IMR-90 (cell line): ENCODE measurements at regions of chr5 and their contacts with region 1.

Region 1: GRCh38 chr5:65481635-65482295 is at the start of gene ADAMTS6:
- DNase-seq: peak; percentile 99
- ATAC-seq: peak; percentile 85
- H3K4me3 ChIP-seq: peak within 1 kb of the TSS; percentile 88
- H3K27ac ChIP-seq: peak within 1 kb of the TSS; percentile 96
- H3K4me1 ChIP-seq: peaks cover 2% of the 10 kb centered on the region; the same call in 1 of the 2 replicates
- H3K27me3 ChIP-seq: no peaks in the 10 kb centered on the region
- CTCF ChIP-seq: no peak
- POLR2A ChIP-seq: peak; percentile 76; the same call in 1 of the 2 replicates
- RAD21 ChIP-seq: no peak
- total RNA-seq, gene ADAMTS6: 160 and 173 TPM in 2 replicates

Region 2: DNA sequence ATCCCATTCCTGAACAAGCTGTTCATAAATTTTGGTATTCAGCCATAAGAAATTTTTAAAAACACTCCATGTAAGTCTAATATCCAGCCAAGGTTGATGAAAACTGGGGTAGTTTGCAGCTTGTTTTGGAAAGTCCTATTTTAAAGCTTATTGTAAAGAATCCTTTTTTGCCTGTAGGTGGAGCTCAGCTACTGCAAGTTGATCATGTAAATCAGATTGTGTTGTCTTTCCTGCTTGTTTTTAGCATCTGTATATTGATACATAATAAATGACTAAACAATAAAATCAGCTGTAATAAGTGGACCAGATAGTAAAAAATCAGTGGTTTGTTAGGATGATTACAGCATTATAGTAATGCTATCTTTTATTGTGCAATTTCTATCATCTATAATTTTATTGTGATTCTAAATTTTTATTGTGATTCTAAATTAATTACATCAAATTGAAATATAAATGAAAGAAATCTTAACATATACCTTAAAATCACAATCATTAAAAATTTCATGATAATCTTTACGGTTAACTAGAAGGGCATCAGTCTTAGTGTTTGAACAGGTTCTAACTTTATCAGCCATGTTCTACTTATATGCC is 670.6 kb before region 1 on chr5:
- CTCF ChIA-PET with region 1: interaction called, 9 read pairs
- POLR2A ChIA-PET with region 1: interaction called, 3 read pairs
- dilution Hi-C with region 1: no loop called
- in situ Hi-C with region 1: loop called (anchors 5 kb)
- intact Hi-C with region 1: loop called (anchors 1 kb)
- DNase-seq: peak; percentile 81
- ATAC-seq: peak; percentile 77
- H3K4me3 ChIP-seq: no peak overlapping the region
- H3K27ac ChIP-seq: no peak overlapping the region
- H3K4me1 ChIP-seq: no peaks in the 10 kb centered on the region
- H3K27me3 ChIP-seq: no peaks in the 10 kb centered on the region
- CTCF ChIP-seq: peak; percentile 81
- POLR2A ChIP-seq: 0 out of 2 replicates have a peak, but pooled peaks have one; percentile 30
- RAD21 ChIP-seq: peak; percentile 89

Region 3: DNA sequence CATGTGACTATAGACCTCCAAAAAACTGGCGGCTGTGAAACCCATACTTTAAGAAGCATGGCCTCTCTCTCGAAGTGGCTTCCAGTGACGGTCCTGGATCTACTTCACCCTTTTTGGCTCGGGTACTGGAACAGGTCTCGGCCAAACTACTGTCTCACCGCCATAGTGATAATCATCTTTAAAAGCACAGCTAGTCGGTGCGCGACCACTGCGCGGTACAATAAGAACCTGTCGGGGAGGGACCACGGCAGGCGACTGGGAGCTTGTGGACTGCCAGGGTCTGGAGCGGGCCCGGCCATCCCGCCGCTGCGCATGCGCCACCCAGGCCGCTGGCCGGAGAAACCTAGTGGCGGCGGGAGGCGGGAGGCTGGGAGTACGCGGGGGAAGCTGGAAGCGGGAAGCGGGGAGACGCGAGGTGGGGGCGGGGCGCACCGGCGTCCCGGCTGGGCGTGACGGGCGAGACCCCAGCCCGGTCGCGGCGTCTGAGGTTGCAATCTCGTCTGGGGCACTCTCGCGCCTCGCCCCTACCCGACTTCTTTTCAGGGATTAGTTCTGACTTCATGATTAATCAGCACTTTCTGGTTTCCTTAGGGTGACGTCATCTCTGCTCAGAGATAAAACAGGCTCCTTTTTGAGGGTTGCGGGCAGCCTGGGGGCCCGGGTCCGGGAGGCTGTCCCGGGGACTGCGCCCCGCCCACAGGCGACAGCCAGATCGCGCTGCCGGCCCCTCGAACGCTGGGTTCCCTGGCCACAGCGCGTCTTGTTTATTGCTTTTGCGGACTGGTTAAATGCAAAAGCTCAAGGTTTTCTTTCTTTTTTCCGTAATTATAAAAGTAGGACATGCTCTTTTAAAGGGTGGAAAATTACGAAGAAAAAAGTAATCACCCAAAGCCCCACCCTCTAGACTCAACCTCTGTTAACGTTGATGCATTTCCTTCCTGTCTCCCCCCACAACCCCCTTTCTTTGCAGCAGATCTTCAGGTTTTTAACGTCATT is 446.3 kb before region 1 on chr5:
- CTCF ChIA-PET with region 1: no interaction called
- POLR2A ChIA-PET with region 1: no interaction called
- dilution Hi-C with region 1: no loop called
- in situ Hi-C with region 1: no loop called
- intact Hi-C with region 1: loop called (anchors 1 kb)
- DNase-seq: peak; percentile 97
- ATAC-seq: peak; percentile 91
- H3K4me3 ChIP-seq: peak overlapping the region; percentile 64
- H3K27ac ChIP-seq: peak overlapping the region; percentile 96
- H3K4me1 ChIP-seq: peaks cover 8% of the 10 kb centered on the region
- H3K27me3 ChIP-seq: no peaks in the 10 kb centered on the region
- CTCF ChIP-seq: no peak
- POLR2A ChIP-seq: peak; percentile 88
- RAD21 ChIP-seq: no peak; the same call in 1 of the 2 replicates

Region 4: GRCh38 chr5:65125591-65126541 is 355.9 kb before region 1 on chr5:
- CTCF ChIA-PET with region 1: interaction called, 5 read pairs
- POLR2A ChIA-PET with region 1: interaction called, 11 read pairs
- dilution Hi-C with region 1: no loop called
- in situ Hi-C with region 1: no loop called
- intact Hi-C with region 1: loop called (anchors 1 kb)
- DNase-seq: peak; percentile 82
- ATAC-seq: peak; percentile 45
- H3K4me3 ChIP-seq: no peak overlapping the region
- H3K27ac ChIP-seq: peak overlapping the region; percentile 90
- H3K4me1 ChIP-seq: peaks cover 19% of the 10 kb centered on the region
- H3K27me3 ChIP-seq: no peaks in the 10 kb centered on the region
- CTCF ChIP-seq: no peak
- POLR2A ChIP-seq: no peak; the same call in 1 of the 2 replicates
- RAD21 ChIP-seq: no peak

Region 5: DNA sequence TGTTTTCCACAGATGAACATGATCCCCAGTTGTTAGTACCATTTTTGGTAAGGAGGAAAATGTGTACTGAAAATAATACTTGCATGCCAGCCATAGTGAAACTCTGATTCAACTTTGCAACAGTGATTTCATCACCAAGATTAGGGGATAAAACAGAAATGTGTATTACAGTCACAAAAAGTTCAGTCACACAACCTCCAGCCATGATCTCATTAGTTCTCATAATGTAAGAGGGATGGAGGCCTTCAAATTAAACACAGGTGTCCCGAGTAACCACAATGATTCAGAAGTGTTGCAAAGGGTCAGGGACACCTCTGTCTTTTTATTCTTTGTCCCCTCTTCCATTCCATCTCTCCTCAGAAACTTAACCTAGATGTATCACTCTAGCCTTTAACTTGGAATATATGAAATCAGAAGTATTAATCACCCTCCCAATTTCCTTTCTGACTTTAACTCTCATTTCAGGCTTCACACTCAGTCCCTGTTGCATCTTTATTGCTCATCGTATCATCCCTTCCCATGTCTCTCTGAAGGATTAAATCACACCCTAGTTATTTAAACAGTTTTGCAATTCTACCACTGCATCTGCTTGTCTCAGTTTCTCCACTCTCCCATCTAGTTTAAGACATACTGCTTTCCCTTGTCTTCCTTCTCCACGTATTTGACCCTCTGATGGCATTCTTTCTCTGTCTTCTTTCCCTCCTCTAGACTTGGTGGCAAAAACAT is 291.3 kb before region 1 on chr5:
- CTCF ChIA-PET with region 1: no interaction called
- POLR2A ChIA-PET with region 1: no interaction called
- dilution Hi-C with region 1: no loop called
- in situ Hi-C with region 1: loop called (anchors 5 kb)
- intact Hi-C with region 1: loop called (anchors 1 kb)
- DNase-seq: peak; percentile 99
- ATAC-seq: peak; percentile 79
- H3K4me3 ChIP-seq: no peak overlapping the region
- H3K27ac ChIP-seq: peak overlapping the region; percentile 28
- H3K4me1 ChIP-seq: peaks cover 8% of the 10 kb centered on the region
- H3K27me3 ChIP-seq: no peaks in the 10 kb centered on the region
- CTCF ChIP-seq: no peak
- POLR2A ChIP-seq: peak; percentile 59; the same call in 1 of the 2 replicates
- RAD21 ChIP-seq: no peak